ENCODE measurements at regions of chr11 and their contacts with region 1.

Region 1: DNA sequence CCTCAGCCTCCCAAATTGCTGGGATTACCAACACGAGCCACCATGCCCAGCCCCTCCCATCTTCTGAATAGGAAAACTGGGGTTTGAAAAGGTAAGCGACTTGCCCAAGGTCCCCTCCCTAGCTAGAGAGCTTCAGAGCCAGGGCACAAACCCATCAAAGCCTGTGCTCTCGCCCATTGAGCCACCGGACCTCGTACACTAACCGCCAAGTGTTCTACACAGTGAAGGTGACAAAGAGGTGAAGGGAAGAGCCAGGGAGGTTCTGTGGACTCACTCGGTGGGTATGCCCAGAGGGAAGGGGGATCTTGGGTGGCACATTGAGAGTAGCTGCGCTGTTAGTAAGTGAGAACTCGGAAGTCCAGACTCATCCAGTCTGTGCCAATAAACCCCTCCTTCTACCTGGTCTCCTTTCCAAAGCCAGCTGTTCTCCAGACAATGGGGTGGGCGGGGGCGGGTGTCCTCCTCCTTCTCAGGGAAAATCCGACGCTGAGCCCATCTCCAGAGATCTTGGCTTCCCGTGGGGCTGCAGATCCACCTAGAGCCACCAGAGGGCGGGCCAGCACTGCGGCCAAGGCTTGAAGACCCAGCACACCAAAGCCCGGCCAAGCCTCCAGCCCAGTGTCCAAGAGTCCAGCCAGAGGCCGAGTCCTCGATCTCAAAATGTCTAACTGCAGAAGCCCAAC is 3.2 kb upstream of the RTN4RL2 start:
- DNase-seq: peak; percentile 80 to 91
- ATAC-seq: peak; percentile 48 to 77
- H3K4me3 ChIP-seq: no peak overlapping the region
- H3K27ac ChIP-seq: peak overlapping the region; percentile 81 to 89
- H3K4me1 ChIP-seq: peaks cover 39% of the 10 kb centered on the region
- CTCF ChIP-seq: peak; percentile 86
- EP300 ChIP-seq: no peak
- POLR2A ChIP-seq: no peak
- RAD21 ChIP-seq: peak; percentile 89 to 90

Region 2: DNA sequence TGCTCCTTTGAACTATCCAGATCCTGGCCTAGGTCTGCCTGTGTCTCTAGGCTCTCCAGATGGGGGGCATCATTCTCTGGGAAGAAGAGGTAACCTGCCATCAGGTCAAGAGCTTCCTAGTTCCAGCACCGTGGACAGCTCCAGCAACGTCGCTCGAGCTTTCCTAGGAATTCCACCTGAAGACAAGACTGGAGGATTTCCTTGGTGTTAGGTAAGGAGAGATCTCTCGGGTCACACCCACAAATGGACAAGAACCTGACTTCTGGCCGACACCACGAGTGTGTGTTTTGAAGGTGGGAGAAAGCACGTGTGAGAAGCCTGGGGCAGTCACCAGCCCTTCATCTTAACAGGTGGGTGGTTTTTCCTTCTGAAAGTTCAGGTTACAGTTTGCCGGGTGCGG is 77.4 kb before region 1 on chr11:
- CTCF ChIA-PET with region 1: interaction called, 10 read pairs
- POLR2A ChIA-PET with region 1: no interaction called
- DNase-seq: peak in 1 of 2 experiments; percentile 48
- ATAC-seq: peak in 1 of 2 experiments; percentile 44; a peak in 3 of 6 replicates
- H3K4me3 ChIP-seq: no peak overlapping the region
- H3K27ac ChIP-seq: no peak overlapping the region
- H3K4me1 ChIP-seq: peaks cover 17% of the 10 kb centered on the region; the same call in 2 of the 3 replicates
- CTCF ChIP-seq: no peak
- EP300 ChIP-seq: no peak
- POLR2A ChIP-seq: no peak
- RAD21 ChIP-seq: no peak

Region 3: DNA sequence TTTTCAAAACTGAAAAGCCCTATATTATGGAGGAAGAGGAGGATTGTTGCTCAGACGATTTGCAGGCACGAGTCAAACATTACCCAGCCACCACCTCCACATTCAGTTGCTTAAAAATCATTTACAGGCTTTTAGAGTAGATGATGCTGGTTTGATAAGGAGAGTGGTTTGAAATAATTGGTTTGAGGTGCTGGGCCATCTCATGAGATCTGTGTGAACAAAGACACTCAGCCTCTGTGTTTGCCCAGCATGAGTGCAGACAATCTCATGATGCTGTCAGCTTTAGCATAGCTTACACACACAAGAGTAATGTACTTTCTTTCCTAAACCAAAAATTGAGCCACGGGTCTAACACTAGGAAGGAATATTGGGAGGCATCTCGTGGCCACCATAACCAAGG is 34.4 kb before region 1 on chr11:
- CTCF ChIA-PET with region 1: interaction called, 13 read pairs
- POLR2A ChIA-PET with region 1: no interaction called
- DNase-seq: no peak
- ATAC-seq: no peak
- H3K4me3 ChIP-seq: no peak overlapping the region
- H3K27ac ChIP-seq: no peak overlapping the region
- H3K4me1 ChIP-seq: peaks cover 25% of the 10 kb centered on the region
- CTCF ChIP-seq: no peak
- EP300 ChIP-seq: no peak
- POLR2A ChIP-seq: no peak
- RAD21 ChIP-seq: no peak

Region 4: DNA sequence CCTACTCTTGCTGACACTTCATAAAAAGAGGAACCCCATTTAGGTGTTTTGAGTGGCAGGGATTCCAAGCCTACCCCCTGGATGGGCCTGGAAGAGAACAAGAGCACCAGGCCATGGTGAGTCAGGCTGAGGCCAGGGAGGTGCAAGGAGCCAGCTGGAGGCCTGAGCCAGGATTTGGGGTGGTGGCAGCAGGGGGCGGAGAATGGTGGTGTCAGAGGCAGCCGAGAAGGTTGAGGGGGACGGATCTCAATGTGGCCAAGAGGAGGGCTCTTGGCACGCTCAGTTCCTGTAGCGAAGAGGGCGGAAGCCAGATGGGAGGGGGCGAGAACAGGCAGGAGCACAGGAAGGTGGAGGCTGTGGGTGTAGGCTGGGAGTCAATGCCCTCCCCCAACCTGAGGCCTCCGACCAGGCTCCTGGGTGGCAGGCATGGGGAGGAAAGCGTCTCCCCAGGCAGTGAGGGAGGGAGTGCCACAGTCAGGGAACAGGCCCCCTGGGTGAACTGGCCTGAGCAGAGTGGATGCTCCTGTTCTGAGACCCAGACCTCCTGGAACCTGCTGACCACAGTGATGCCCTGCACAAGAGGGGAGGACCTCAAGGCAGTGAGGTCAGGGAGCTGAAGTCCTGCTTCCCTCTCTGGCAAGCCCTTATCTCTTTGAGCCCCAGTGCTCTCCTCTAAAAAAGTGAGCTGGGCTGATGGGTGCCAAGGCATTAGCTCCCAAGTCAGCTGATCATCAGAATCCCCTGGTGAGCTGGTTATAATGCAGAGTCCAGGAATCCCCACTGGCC is 17.1 kb after region 1 on chr11:
- CTCF ChIA-PET with region 1: interaction called, 228 read pairs
- POLR2A ChIA-PET with region 1: interaction called, 8 read pairs
- DNase-seq: no peak
- ATAC-seq: peak; percentile 10 to 12; a peak in 3 of 6 replicates
- H3K4me3 ChIP-seq: no peak overlapping the region
- H3K27ac ChIP-seq: 0 out of 6 replicates have a peak overlapping the region, but pooled peaks of 1 of the 2 experiments have one; percentile 14
- H3K4me1 ChIP-seq: peaks cover 46% of the 10 kb centered on the region
- CTCF ChIP-seq: no peak
- EP300 ChIP-seq: no peak
- POLR2A ChIP-seq: no peak
- RAD21 ChIP-seq: no peak

Region 5: DNA sequence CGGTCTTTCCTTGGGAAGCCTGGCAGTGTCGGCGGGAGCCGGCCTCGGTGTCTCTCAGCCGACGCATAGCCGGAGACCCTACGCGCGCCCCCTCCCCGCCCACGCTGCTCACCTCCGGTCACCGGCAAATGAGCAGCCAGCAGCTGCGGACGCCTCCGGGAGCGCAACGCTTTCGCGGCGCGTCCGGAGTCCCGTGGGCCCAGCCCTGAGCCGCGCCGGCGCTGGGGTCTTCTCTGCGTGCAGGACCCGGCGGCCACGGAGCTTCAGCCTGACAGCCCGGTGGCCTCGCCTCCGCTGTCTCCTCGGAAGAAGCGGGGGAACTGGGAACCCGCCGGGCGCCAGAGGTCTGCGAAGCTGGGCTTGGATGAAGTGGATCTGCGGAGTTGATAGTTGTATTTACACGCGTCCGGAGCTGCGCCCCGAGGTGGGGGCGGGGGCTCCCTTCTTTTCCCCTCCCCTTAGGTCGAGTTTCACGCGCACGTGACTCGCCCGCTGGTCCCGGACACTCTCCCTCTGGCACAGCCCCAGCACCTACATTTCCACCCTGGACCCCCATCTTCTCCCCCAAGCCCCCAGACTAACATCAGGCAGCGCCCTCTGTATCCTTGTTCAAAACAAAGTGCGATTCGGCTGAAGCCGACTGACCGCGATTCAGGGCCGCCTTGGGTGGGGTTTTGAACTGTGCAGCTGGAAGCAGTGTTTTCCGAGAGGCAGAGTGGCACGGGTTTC is 58.4 kb after region 1 on chr11 and contains the start of gene SLC43A1:
- CTCF ChIA-PET with region 1: interaction called, 67 read pairs
- POLR2A ChIA-PET with region 1: no interaction called
- DNase-seq: peak in 1 of 2 experiments; percentile 65
- ATAC-seq: peak; percentile 51 to 76
- H3K4me3 ChIP-seq: peak within 1 kb of the TSS; percentile 78
- H3K27ac ChIP-seq: peak within 1 kb of the TSS; percentile 68 to 85
- H3K4me1 ChIP-seq: peaks cover 4% of the 10 kb centered on the region; the same call in 1 of the 3 replicates
- CTCF ChIP-seq: no peak
- EP300 ChIP-seq: no peak
- POLR2A ChIP-seq: no peak
- RAD21 ChIP-seq: no peak
- polyA plus RNA-seq, gene SLC43A1: 4.6 and 5.3 TPM in 2 replicates